PC-9 (cell line): ENCODE measurements at regions of chr4 and their contacts with region 1.

Region 1: GRCh38 chr4:53601251-53601764 is 10.0 kb upstream of the LNX1 start:
- DNase-seq: peak; percentile 77 to 82
- H3K4me3 ChIP-seq: 0 out of 2 replicates have a peak overlapping the region, but pooled peaks have one; percentile 22
- H3K27ac ChIP-seq: no peak overlapping the region
- H3K4me1 ChIP-seq: peaks cover 18% of the 10 kb centered on the region
- H3K27me3 ChIP-seq: no peaks in the 10 kb centered on the region
- CTCF ChIP-seq: peak; percentile 48

Region 2: GRCh38 chr4:52627876-52628275 is 973.4 kb before region 1 on chr4:
- CTCF ChIA-PET with region 1: no interaction called
- POLR2A ChIA-PET with region 1: no interaction called
- intact Hi-C with region 1: no loop called
- DNase-seq: no peak
- H3K4me3 ChIP-seq: no peak overlapping the region
- H3K27ac ChIP-seq: no peak overlapping the region
- H3K4me1 ChIP-seq: no peaks in the 10 kb centered on the region
- H3K27me3 ChIP-seq: no peaks in the 10 kb centered on the region
- CTCF ChIP-seq: no peak

Region 3: GRCh38 chr4:53205970-53206369 is 395.3 kb before region 1 on chr4:
- CTCF ChIA-PET with region 1: no interaction called
- POLR2A ChIA-PET with region 1: no interaction called
- intact Hi-C with region 1: no loop called
- DNase-seq: no peak
- H3K4me3 ChIP-seq: no peak overlapping the region
- H3K27ac ChIP-seq: no peak overlapping the region
- H3K4me1 ChIP-seq: no peaks in the 10 kb centered on the region
- H3K27me3 ChIP-seq: no peaks in the 10 kb centered on the region
- CTCF ChIP-seq: no peak

Region 4: GRCh38 chr4:53476232-53477037 is 124.9 kb before region 1 on chr4:
- CTCF ChIA-PET with region 1: no interaction called
- POLR2A ChIA-PET with region 1: no interaction called
- intact Hi-C with region 1: loop called (anchors 10 kb)
- DNase-seq: no peak
- H3K4me3 ChIP-seq: no peak overlapping the region
- H3K27ac ChIP-seq: no peak overlapping the region
- H3K4me1 ChIP-seq: peaks cover 11% of the 10 kb centered on the region
- H3K27me3 ChIP-seq: no peaks in the 10 kb centered on the region
- CTCF ChIP-seq: no peak

Region 5: GRCh38 chr4:53644607-53645006 is 43.3 kb after region 1 on chr4:
- CTCF ChIA-PET with region 1: no interaction called
- POLR2A ChIA-PET with region 1: no interaction called
- intact Hi-C with region 1: loop called (anchors 2 kb)
- DNase-seq: peak; percentile 53 to 84
- H3K4me3 ChIP-seq: no peak overlapping the region
- H3K27ac ChIP-seq: no peak overlapping the region
- H3K4me1 ChIP-seq: peaks cover 6% of the 10 kb centered on the region; the same call in 1 of the 2 replicates
- H3K27me3 ChIP-seq: no peaks in the 10 kb centered on the region
- CTCF ChIP-seq: no peak

Region 6: GRCh38 chr4:53702334-53703266 is 101.3 kb after region 1 on chr4:
- CTCF ChIA-PET with region 1: no interaction called
- POLR2A ChIA-PET with region 1: no interaction called
- intact Hi-C with region 1: loop called (anchors 5 kb)
- DNase-seq: peak; percentile 46 to 59
- H3K4me3 ChIP-seq: peak overlapping the region; percentile 23; the same call in 1 of the 2 replicates
- H3K27ac ChIP-seq: no peak overlapping the region
- H3K4me1 ChIP-seq: 0 out of 2 replicates have a peak, but pooled peaks cover 7% of the 10 kb centered on the region
- H3K27me3 ChIP-seq: no peaks in the 10 kb centered on the region
- CTCF ChIP-seq: no peak